ENCODE measurements at regions of chr6 and their contacts with region 1.

Region 1: DNA sequence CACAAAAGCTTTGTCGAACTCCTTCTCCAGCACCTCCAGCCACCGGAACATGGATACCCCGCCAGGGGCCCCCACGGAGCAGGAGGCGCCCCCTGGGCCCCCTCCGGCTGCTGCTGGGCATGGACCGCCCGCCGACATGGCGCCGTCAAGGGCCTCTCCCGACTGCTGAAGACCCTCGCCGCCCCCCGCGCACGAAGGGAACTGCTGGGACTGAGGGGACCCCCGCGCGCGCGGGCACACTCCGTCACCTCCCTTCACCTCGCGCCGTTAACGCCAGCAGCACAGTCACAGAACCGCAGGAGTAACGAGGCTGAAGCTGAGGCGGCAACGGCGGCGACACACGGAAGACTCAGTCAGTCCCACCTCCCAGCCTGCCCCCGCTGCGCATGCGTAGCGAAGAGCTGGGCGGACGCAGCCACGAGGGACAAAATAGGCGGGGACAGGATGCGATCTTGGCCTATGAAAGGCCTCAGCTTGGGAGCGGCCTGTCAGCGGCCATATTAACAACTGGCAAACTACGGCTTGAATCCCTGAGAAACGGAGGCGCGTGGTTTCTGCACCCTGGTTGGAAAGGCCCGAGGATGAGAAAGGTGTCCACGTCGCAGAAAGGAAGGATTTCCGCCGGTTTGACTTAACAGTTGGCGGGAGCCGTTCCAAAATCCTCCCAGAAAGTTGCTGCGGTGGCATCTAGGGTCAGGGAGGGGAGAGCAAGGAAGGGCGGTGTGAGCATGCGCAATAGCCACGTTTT is at the start of gene GOPC:
- DNase-seq: peak; percentile 94
- H3K4me3 Mint-ChIP-seq: peak within 1 kb of the TSS; percentile 99
- H3K27ac Mint-ChIP-seq: peak within 1 kb of the TSS; percentile 100
- H3K4me1 Mint-ChIP-seq: peaks cover 44% of the 10 kb centered on the region
- H3K27me3 Mint-ChIP-seq: peaks cover 2% of the 10 kb centered on the region
- total RNA-seq, gene GOPC: 23.6 and 24.3 TPM in 2 replicates

Region 2: DNA sequence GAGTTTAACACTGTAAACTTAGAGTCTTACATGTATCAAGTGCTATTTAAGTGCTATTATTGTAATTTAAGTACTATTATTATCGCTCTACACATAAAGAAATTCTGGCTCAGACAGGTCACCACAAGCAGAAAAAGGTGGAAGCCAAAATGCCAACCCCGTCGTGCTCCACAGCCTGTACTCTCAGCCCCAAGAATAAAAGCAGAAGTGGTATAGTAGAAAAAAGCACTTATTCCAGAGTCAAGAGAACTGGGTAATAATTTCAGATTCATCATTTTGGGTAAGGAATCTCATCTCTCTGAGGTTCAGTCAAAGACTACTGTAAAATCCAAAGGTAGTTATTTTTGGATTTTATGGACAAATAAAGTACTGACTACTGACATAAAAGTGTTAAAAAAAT is 934.7 kb before region 1 on chr6:
- intact Hi-C with region 1: loop called (anchors 5 kb)
- DNase-seq: no peak
- H3K4me3 Mint-ChIP-seq: peak overlapping the region; percentile 100
- H3K27ac Mint-ChIP-seq: peak overlapping the region; percentile 97
- H3K4me1 Mint-ChIP-seq: peaks cover 45% of the 10 kb centered on the region
- H3K27me3 Mint-ChIP-seq: peaks cover 6% of the 10 kb centered on the region

Region 3: GRCh38 chr6:117346142-117346930 is 256.0 kb before region 1 on chr6:
- intact Hi-C with region 1: loop called (anchors 1 kb)
- DNase-seq: no peak
- H3K4me3 Mint-ChIP-seq: no peak overlapping the region
- H3K27ac Mint-ChIP-seq: no peak overlapping the region
- H3K4me1 Mint-ChIP-seq: no peaks in the 10 kb centered on the region
- H3K27me3 Mint-ChIP-seq: peaks cover 15% of the 10 kb centered on the region

Region 4: DNA sequence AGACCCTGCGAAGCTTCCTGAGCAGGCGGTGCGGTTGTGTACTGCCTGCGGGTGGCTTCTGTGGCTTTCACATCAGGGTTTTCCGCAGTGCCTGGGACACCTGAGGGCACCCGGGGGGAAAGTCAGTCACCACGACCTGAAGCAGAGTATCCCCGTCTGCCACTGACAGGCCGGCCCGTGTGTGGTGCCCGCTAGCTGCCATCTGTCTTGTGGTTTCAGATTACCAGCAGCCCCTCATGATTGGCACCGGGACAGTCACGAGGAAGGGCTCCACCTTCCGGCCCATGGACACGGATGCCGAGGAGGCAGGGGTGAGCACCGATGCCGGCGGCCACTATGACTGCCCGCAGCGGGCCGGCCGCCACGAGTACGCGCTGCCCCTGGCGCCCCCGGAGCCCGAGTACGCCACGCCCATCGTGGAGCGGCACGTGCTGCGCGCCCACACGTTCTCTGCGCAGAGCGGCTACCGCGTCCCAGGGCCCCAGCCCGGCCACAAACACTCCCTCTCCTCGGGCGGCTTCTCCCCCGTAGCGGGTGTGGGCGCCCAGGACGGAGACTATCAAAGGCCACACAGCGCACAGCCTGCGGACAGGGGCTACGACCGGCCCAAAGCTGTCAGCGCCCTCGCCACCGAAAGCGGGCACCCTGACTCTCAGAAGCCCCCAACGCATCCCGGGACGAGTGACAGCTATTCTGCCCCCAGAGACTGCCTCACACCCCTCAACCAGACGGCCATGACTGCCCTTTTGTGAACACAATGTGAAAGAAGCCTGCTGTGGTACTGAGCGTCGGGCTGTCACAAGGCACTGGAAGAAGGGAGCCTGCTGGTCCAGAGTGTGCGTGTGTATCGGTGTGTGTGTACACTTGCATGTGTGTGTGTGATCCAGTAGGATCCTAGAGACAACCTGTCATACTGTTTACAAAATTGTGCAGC is 54.4 kb before region 1 on chr6:
- intact Hi-C with region 1: loop called (anchors 1 kb)
- DNase-seq: peak; percentile 26
- H3K4me3 Mint-ChIP-seq: peak overlapping the region; percentile 77
- H3K27ac Mint-ChIP-seq: peak overlapping the region; percentile 12
- H3K4me1 Mint-ChIP-seq: peaks cover 45% of the 10 kb centered on the region
- H3K27me3 Mint-ChIP-seq: peaks cover 10% of the 10 kb centered on the region

Region 5: GRCh38 chr6:117674991-117675657 is 72.8 kb after region 1 on chr6 and contains the start of gene NUS1:
- intact Hi-C with region 1: loop called (anchors 1 kb)
- DNase-seq: peak; percentile 97
- H3K4me3 Mint-ChIP-seq: peak within 1 kb of the TSS; percentile 96
- H3K27ac Mint-ChIP-seq: peak within 1 kb of the TSS; percentile 87
- H3K4me1 Mint-ChIP-seq: peaks cover 49% of the 10 kb centered on the region
- H3K27me3 Mint-ChIP-seq: no peaks in the 10 kb centered on the region
- total RNA-seq, gene NUS1: 49.5 and 52.1 TPM in 2 replicates

Measured in activated T-helper 1 cell treated with anti-CD3 and anti-CD28 coated beads, Interleukin-12 subunit alpha, Interleukin-12 subunit beta, Interleukin-2, Interleukin-4 antibody, amounts not matched to agents 30 ng/mL and 10 ng/mL and 1 ng/mL, durations not matched to agents 14 hours and 24 hours and 36 hours (primary cell).